Naive thymus-derived CD4-positive, alpha-beta T cell (primary cell): ENCODE measurements at regions of chr14 and their contacts with region 1.

Region 1: GRCh38 chr14:68911594-68912227 is 67.4 kb downstream of the ACTN1 start:
- DNase-seq: peak; percentile 54 to 86 (median 80)
- ATAC-seq: peak; percentile 99
- H3K4me3 ChIP-seq: no peak overlapping the region
- H3K4me3 Mint-ChIP-seq: peak overlapping the region in 1 of 10 donors; percentile 37
- H3K27ac ChIP-seq: no peak overlapping the region
- H3K27ac Mint-ChIP-seq: peak overlapping the region; percentile 51 to 90 (median 82)
- H3K4me1 ChIP-seq: peaks cover 0 to 15% of the 10 kb centered on the region in 2 donors
- H3K4me1 Mint-ChIP-seq: peaks cover 13 to 57% (median 43%) of the 10 kb centered on the region in 7 donors
- H3K27me3 ChIP-seq: no peaks in the 10 kb centered on the region
- H3K27me3 Mint-ChIP-seq: no peaks in the 10 kb centered on the region

Region 2: GRCh38 chr14:68232300-68233055 is 679.2 kb before region 1 on chr14:
- CTCF ChIA-PET with region 1: no interaction called
- POLR2A ChIA-PET with region 1: no interaction called
- intact Hi-C with region 1: no loop called
- DNase-seq: peak in 1 of 9 donors; percentile 39
- ATAC-seq: peak; percentile 37
- H3K4me3 ChIP-seq: no peak overlapping the region
- H3K4me3 Mint-ChIP-seq: no peak overlapping the region
- H3K27ac ChIP-seq: no peak overlapping the region
- H3K27ac Mint-ChIP-seq: no peak overlapping the region
- H3K4me1 ChIP-seq: no peaks in the 10 kb centered on the region
- H3K4me1 Mint-ChIP-seq: peaks cover 0 to 2% (median 0%) of the 10 kb centered on the region in 7 donors
- H3K27me3 ChIP-seq: no peaks in the 10 kb centered on the region
- H3K27me3 Mint-ChIP-seq: no peaks in the 10 kb centered on the region

Region 3: DNA sequence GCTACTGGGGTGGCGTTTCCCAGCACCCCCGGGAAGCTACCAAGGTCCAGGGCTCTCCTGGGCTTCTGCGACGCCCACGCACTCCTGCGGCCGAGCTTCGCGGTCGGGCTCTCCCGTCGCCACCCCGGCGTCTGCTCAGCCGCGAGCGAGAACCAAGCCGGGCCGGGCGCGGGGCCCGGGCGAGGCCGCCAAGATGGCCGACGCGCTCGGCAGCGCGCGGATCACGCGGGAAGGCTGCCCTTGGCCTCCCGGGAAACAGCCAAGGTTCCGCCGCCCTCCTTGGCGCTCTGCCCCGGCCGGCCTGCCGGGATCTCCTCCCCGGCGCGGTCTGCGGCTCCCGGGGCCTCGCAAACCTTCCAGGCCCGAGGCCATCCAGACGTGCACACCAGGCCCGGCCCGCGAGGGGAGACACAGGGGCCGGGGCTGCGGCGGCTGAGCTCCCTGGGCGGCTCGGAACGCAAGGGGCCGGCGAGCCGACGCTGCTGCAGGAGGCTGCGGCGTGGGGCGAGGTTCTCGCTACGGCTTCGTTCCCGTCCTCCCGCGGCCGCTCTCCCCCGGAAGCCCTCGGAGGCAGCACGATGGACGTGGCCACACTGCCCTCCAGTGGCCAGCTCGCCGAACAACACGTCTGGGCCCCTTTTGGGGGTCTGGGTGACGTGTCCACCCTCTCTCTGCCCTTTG is 95.3 kb before region 1 on chr14:
- CTCF ChIA-PET with region 1: no interaction called
- POLR2A ChIA-PET with region 1: no interaction called
- intact Hi-C with region 1: no loop called
- DNase-seq: peak; percentile 77 to 93 (median 87)
- ATAC-seq: peak; percentile 92
- H3K4me3 ChIP-seq: peak overlapping the region; percentile 63
- H3K4me3 Mint-ChIP-seq: peak overlapping the region; percentile 82 to 95 (median 86)
- H3K27ac ChIP-seq: peak overlapping the region; percentile 95
- H3K27ac Mint-ChIP-seq: peak overlapping the region; percentile 93 to 100 (median 96)
- H3K4me1 ChIP-seq: peaks cover 59 to 62% of the 10 kb centered on the region in 2 donors
- H3K4me1 Mint-ChIP-seq: peaks cover 48 to 89% (median 66%) of the 10 kb centered on the region in 7 donors
- H3K27me3 ChIP-seq: no peaks in the 10 kb centered on the region
- H3K27me3 Mint-ChIP-seq: no peaks in the 10 kb centered on the region

Region 4: DNA sequence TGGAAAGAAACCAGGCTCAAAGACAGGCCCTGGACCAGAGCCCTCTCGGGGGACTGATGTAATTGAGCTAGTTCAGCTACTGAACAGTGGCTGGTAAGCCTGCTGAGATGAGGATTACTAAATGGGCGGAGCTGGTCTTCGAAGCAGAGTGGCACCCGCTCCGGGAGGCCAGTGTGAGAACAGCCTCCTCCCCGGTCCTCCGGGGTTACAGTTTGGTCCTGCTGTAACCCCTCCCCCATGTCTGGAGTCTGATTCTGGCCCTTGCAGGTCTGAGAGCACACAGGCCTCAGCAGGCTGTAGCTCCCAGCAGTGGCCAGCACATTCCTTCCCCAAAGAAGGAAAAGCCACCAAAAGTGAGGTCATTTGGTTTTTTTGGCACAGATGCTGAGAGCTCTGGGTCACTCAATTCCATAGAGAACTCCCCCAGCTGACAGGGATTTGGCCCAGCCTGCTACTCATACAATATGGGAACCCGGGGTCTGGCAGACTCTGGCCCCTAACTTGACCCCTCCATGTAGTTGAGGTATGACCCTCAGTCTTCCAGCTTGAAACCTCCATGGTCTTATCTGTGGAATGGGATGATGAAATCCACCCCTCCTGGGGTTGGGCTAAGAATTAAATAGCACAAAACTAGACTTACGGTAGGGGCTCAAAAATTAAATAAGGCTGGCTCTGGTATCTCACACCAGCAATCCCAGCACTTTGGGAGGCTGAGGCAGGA is 28.3 kb after region 1 on chr14:
- CTCF ChIA-PET with region 1: interaction called, 4 read pairs
- POLR2A ChIA-PET with region 1: no interaction called
- intact Hi-C with region 1: loop called in 1 of 2 experiments (anchors 2 kb)
- DNase-seq: no peak
- ATAC-seq: no peak
- H3K4me3 ChIP-seq: no peak overlapping the region
- H3K4me3 Mint-ChIP-seq: peak overlapping the region in 6 of 10 donors; percentile 8 to 76 (median 32)
- H3K27ac ChIP-seq: peak overlapping the region; percentile 20
- H3K27ac Mint-ChIP-seq: peak overlapping the region in 8 of 9 donors; percentile 44 to 91 (median 85)
- H3K4me1 ChIP-seq: peaks cover 0 to 70% of the 10 kb centered on the region in 2 donors
- H3K4me1 Mint-ChIP-seq: peaks cover 15 to 99% (median 92%) of the 10 kb centered on the region in 7 donors
- H3K27me3 ChIP-seq: no peaks in the 10 kb centered on the region
- H3K27me3 Mint-ChIP-seq: no peaks in the 10 kb centered on the region

Region 5: DNA sequence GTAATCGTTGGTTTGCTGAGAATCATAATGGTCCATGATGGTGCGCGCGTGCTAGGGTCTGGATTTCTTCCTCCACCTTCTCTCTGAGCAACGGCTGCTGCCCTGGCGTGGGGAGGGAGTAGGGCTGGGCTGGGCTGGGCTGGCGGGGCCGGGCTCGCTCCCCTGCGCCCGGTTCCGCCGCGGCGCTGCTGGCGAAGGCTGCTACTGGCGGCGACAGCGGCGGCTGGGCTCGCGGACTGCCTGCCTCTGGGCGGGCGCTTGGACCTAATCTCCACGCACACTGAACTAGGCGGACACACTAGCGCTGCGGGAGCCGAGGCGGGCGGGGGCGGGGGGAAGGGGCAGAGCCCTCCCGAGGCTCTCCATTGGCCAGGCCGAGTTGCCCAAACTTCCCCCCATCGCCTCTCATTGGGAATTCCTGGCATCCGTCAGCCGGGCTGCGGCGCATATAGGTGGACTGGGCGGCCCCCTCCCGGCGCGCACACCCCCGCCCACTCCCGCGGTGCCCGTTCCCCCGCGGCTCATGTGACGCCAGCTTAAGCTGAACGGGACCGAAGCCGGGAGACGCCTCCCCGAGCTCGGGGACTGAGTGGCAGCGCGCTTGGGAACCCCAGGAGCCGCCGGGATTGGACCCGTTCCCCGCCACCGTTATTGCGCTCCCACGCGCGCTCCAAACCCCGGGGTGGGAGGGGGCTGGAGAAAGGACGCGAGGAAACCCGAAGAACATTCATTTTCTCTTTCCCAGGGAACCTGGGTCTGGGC is 67.5 kb after region 1 on chr14 and contains the start of gene ACTN1:
- CTCF ChIA-PET with region 1: interaction called, 8 read pairs
- POLR2A ChIA-PET with region 1: interaction called, 4 read pairs
- intact Hi-C with region 1: loop called (anchors 1 to 2 kb)
- DNase-seq: peak; percentile 46 to 74 (median 70)
- ATAC-seq: peak; percentile 81
- H3K4me3 ChIP-seq: peak within 1 kb of the TSS; percentile 83
- H3K4me3 Mint-ChIP-seq: peak within 1 kb of the TSS; percentile 75 to 98 (median 94)
- H3K27ac ChIP-seq: peak within 1 kb of the TSS; percentile 87
- H3K27ac Mint-ChIP-seq: peak within 1 kb of the TSS; percentile 81 to 100 (median 98)
- H3K4me1 ChIP-seq: peaks cover 5 to 33% of the 10 kb centered on the region in 2 donors
- H3K4me1 Mint-ChIP-seq: peaks cover 29 to 59% (median 47%) of the 10 kb centered on the region in 7 donors
- H3K27me3 ChIP-seq: no peaks in the 10 kb centered on the region
- H3K27me3 Mint-ChIP-seq: peaks cover 0 to 36% (median 0%) of the 10 kb centered on the region in 5 donors
- total RNA-seq, gene ACTN1: 41.3 to 249 (median 227) TPM

Region 6: DNA sequence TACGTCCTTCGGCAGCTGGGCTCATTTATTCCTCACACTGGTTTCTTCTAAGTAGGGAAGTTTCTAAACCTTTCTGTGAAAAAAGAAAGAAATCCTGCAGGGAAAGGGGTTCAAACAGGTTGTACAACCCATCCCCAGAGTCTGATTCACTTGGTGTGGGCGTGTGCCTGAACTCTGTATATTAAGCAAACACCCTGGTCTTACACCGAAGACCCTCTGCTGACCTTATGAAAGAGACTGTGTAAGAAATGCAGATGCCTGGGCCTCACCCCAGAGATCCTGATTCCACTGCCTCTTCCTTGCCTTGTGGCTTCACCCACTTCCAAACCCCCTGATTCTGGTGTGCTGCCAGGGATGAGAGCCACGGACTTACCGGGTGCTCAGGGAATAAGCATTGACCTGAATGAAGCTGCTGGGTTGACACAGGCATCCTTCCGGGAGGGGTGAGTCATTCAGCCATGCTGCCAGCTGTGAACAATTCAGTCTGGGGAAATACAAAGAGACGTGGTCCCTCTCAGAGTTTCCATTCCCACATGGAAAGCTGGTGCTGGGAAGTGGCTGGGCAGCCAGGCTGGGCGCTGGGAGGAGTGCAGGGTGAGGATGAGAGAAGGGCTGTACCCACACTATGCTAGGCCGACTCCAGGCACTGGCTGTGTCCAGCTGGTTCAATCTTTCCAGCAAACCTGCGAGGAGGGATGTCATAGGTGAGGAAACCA is 93.9 kb after region 1 on chr14:
- CTCF ChIA-PET with region 1: interaction called, 54 read pairs
- POLR2A ChIA-PET with region 1: interaction called, 4 read pairs
- intact Hi-C with region 1: loop called in 1 of 2 experiments (anchors 1 kb)
- DNase-seq: no peak
- ATAC-seq: no peak
- H3K4me3 ChIP-seq: no peak overlapping the region
- H3K4me3 Mint-ChIP-seq: no peak overlapping the region
- H3K27ac ChIP-seq: no peak overlapping the region
- H3K27ac Mint-ChIP-seq: no peak overlapping the region
- H3K4me1 ChIP-seq: no peaks in the 10 kb centered on the region
- H3K4me1 Mint-ChIP-seq: peaks cover 7 to 12% (median 9%) of the 10 kb centered on the region in 7 donors
- H3K27me3 ChIP-seq: no peaks in the 10 kb centered on the region
- H3K27me3 Mint-ChIP-seq: peaks cover 0 to 5% (median 0%) of the 10 kb centered on the region in 5 donors

Region 7: DNA sequence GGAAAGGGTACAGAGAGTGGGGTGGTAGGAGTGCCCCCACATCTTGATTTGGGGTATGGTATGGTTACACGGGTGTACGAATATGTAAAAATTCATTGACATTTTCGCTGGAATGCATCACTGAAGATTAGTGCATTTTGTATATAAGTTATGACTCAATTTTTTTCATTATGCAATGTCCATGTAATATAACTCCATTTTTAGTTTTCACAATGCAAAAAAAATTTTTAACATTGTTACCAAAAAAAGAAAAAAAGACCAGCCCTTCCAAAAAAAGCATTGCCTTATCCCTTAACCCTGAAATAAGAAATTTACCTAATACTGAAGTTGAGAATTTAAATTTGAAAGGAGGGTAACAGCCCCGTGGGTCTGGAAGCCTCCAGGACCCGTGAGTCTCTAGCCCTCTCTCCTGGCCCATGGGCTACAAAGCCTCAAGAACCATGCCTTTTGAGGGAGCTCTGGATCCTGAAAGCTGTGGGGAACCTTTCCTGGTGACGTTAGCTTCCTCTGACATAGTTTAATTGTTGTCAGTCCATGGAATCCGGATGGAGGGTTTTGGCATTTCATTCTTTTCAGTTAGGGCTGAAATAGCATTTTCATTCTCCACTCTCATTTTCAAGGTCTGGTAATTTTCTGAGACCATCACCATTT is 123.0 kb after region 1 on chr14:
- CTCF ChIA-PET with region 1: interaction called, 12 read pairs
- POLR2A ChIA-PET with region 1: no interaction called
- intact Hi-C with region 1: no loop called
- DNase-seq: no peak
- ATAC-seq: no peak
- H3K4me3 ChIP-seq: no peak overlapping the region
- H3K4me3 Mint-ChIP-seq: no peak overlapping the region
- H3K27ac ChIP-seq: no peak overlapping the region
- H3K27ac Mint-ChIP-seq: peak overlapping the region in 2 of 9 donors; percentile 6 to 12
- H3K4me1 ChIP-seq: no peaks in the 10 kb centered on the region
- H3K4me1 Mint-ChIP-seq: peaks cover 0 to 2% (median 0%) of the 10 kb centered on the region in 7 donors
- H3K27me3 ChIP-seq: no peaks in the 10 kb centered on the region
- H3K27me3 Mint-ChIP-seq: peaks cover 16 to 35% (median 26%) of the 10 kb centered on the region in 5 donors

Region 8: GRCh38 chr14:69090187-69090789 is 178.6 kb after region 1 on chr14:
- CTCF ChIA-PET with region 1: interaction called, 25 read pairs
- POLR2A ChIA-PET with region 1: no interaction called
- intact Hi-C with region 1: loop called (anchors 1 kb)
- DNase-seq: peak in 7 of 9 donors; percentile 22 to 47 (median 40)
- ATAC-seq: peak; percentile 74
- H3K4me3 ChIP-seq: no peak overlapping the region
- H3K4me3 Mint-ChIP-seq: no peak overlapping the region
- H3K27ac ChIP-seq: no peak overlapping the region
- H3K27ac Mint-ChIP-seq: peak overlapping the region in 1 of 9 donors; percentile 31
- H3K4me1 ChIP-seq: no peaks in the 10 kb centered on the region
- H3K4me1 Mint-ChIP-seq: peaks cover 6 to 21% (median 12%) of the 10 kb centered on the region in 7 donors
- H3K27me3 ChIP-seq: no peaks in the 10 kb centered on the region
- H3K27me3 Mint-ChIP-seq: no peaks in the 10 kb centered on the region